ENCODE measurements at regions of chr4 and their contacts with region 1.

Region 1: DNA sequence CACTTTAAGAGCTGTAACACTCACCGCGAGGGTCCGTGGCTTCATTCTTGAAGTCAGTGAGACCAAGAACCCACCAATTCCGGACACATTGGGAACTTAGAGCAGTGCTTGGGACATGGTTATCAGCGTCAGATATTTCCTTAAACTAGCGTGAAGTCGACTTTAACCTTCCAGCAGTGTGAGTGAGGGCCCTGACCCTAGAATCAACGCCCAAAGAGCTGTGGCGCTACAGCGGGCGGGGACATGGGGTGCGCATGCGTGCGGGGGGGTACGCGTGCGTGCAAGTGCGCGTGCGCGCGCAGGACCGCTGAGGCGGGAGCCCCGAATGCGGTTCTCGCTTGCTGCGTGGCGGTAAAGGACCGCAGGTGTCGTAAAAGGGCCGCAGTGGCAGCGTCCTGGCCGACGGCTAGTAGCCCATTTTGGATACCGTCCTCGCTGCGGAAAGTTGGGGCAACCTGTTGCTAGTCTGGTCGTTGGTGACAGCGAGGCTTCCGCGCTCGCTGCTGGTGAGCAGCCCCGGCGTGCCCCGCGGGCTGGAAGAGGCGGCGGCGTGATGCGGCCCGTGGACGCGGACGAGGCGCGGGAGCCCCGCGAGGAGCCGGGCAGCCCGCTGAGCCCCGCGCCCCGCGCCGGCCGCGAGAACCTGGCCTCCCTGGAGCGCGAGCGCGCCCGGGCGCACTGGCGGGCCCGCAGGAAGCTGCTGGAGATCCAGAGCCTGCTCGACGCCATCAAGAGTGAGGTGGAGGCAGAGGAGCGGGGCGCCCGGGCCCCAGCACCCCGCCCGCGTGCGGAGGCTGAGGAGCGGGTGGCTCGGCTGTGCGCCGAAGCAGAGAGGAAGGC is 19.8 kb upstream of the S100P start:
- DNase-seq: peak; percentile 92 to 97 (median 94)
- ATAC-seq: peak; percentile 83 to 86
- H3K4me3 Mint-ChIP-seq: peak overlapping the region; percentile 78 to 100 (median 96)
- H3K27ac Mint-ChIP-seq: peak overlapping the region; percentile 96 to 99 (median 99)
- H3K4me1 Mint-ChIP-seq: peaks cover 37 to 58% (median 53%) of the 10 kb centered on the region in 4 donors
- H3K27me3 Mint-ChIP-seq: peaks cover 0 to 6% (median 0%) of the 10 kb centered on the region in 5 donors

Region 2: DNA sequence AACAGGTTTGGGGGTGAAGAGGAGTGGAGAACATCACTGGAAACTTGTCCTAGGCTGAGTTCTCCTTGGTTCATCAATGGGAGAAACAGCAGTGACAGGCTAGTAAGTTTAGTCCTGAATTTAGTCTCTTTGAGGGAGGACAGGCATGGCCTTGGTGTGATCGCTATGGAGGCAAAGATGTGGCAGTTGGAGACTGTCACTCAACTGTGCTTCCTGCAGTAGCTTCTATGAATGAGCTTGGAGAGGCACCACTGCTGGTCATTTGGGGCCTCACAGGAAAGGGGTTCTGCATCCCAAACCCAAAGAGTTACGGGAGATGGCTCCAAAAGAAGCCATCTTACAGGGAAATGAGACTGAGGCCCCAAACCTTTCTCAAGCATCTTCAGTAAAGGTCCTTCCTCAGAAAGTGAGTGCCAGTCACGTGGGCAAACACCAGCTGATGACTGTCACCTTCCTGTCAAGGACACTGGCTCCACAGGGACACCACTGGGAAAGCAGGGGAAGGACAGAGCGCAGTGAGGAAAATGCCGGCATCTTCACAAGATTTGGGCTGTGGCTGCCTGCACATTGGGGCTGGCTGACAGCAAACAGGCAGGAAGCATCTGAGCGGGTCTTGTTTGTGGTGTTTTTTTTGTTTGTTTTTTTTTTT is 26.2 kb before region 1 on chr4:
- POLR2A ChIA-PET with region 1: interaction called, 165 read pairs
- DNase-seq: no peak
- ATAC-seq: no peak
- H3K4me3 Mint-ChIP-seq: no peak overlapping the region
- H3K27ac Mint-ChIP-seq: peak overlapping the region in 3 of 10 donors; percentile 24 to 100 (median 37)
- H3K4me1 Mint-ChIP-seq: peaks cover 5 to 27% (median 17%) of the 10 kb centered on the region in 4 donors
- H3K27me3 Mint-ChIP-seq: no peaks in the 10 kb centered on the region

Region 3: DNA sequence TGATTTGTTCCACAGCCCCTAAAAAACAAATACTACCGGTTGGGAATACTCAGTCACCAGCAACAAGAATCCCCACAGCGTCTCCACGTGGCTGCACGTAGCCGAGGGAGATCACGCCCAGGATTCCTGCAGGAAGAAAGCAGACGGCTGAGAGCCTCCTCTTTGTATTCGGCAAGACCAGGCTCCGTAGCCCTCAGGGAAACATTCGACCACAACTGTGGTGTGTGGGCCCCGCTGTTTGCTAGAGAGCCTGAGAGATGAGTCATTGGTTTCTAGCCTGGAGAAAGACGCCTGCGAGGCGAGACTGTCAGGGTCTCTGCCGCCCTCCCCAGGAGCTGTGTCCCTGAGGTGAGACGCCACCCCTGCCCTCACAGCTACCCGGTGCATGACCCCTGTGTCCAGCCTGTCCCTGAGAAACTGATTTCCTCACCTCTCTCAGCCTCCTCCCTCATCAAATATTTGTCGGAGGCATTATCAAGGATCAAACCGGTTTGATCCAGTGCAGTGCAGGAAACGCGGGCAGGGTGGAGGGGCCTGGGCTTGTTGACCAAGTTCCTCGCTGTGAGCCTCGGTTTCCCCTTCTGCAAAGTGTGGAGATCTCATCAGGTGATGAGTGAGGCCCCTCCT is 15.1 kb after region 1 on chr4:
- POLR2A ChIA-PET with region 1: interaction called, 521 read pairs
- DNase-seq: peak; percentile 39 to 86 (median 60)
- ATAC-seq: peak; percentile 76 to 90
- H3K4me3 Mint-ChIP-seq: peak overlapping the region; percentile 73 to 95 (median 84)
- H3K27ac Mint-ChIP-seq: peak overlapping the region; percentile 88 to 99 (median 97)
- H3K4me1 Mint-ChIP-seq: peaks cover 39 to 78% (median 70%) of the 10 kb centered on the region in 4 donors
- H3K27me3 Mint-ChIP-seq: no peaks in the 10 kb centered on the region

Region 4: GRCh38 chr4:6783053-6783981 is 109.4 kb after region 1 on chr4:
- POLR2A ChIA-PET with region 1: interaction called, 31 read pairs
- DNase-seq: peak; percentile 78 to 91 (median 88)
- ATAC-seq: peak; percentile 69 to 73
- H3K4me3 Mint-ChIP-seq: peak overlapping the region; percentile 82 to 92 (median 88)
- H3K27ac Mint-ChIP-seq: peak overlapping the region; percentile 68 to 96 (median 91)
- H3K4me1 Mint-ChIP-seq: peaks cover 41 to 74% (median 72%) of the 10 kb centered on the region in 4 donors
- H3K27me3 Mint-ChIP-seq: no peaks in the 10 kb centered on the region

Region 5: GRCh38 chr4:6986781-6987587 is 313.1 kb after region 1 on chr4:
- POLR2A ChIA-PET with region 1: interaction called, 12 read pairs
- DNase-seq: peak; percentile 86 to 97 (median 92)
- ATAC-seq: peak; percentile 88 to 90
- H3K4me3 Mint-ChIP-seq: peak overlapping the region; percentile 93 to 100 (median 97)
- H3K27ac Mint-ChIP-seq: peak overlapping the region; percentile 94 to 99 (median 97)
- H3K4me1 Mint-ChIP-seq: peaks cover 26 to 84% (median 82%) of the 10 kb centered on the region in 4 donors
- H3K27me3 Mint-ChIP-seq: no peaks in the 10 kb centered on the region